ENCODE measurements at regions of chr2 and their contacts with region 1.

Region 1: GRCh38 chr2:69559442-69560146 is 83.9 kb downstream of the AAK1 start:
- DNase-seq: no peak
- H3K4me3 ChIP-seq: no peak overlapping the region
- CTCF ChIP-seq: peak; percentile 50

Region 2: DNA sequence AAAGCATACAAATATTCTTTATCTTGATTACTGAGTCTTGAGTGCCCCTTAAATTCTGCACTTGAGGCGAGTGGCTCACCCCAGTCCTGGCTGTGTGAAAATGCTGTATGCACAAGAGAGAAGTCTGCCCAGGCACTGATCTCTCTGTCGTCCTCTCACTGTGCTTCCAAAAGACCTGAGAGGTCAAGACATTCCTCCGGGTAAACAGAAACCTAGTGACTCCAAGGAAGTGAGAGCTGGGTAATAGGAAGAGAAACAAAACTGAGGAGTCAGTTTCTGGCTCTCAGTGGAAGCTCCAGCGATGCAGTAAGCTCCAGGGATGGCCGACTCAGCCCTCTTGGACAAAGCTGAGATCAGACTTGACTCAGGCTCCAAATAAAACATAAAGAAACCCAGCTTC is 13.0 kb after region 1 on chr2:
- CTCF ChIA-PET with region 1: interaction called, 12 read pairs
- POLR2A ChIA-PET with region 1: no interaction called
- DNase-seq: no peak
- H3K4me3 ChIP-seq: no peak overlapping the region
- CTCF ChIP-seq: no peak